MCF 10A (cell line): ENCODE measurements at regions of chr18 and their contacts with region 1.

Region 1: DNA sequence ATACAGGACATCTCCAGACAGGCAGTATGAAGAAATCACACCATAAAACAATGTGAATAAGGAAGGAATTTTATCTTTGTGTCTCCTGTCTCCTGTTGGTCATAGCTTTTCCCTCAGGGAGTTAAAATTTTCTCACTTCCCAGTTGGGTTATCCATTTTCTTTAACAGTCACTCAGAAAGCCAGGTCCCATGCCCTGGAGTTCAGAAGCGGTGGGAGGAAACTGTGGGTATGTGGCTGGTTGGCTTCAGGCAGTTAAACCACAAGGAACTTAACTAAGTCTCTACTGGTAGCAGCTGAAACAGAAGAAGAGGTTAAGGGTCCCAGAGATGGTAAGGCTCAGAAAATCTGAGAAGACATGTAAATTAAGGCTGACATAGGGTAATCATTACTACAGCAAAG is 6.5 kb upstream of the SMAD2 start:
- DNase-seq: no peak
- H3K4me3 Mint-ChIP-seq: no peak overlapping the region
- H3K27ac Mint-ChIP-seq: no peak overlapping the region
- H3K4me1 Mint-ChIP-seq: peaks cover 3% of the 10 kb centered on the region
- H3K27me3 Mint-ChIP-seq: no peaks in the 10 kb centered on the region
- CTCF ChIP-seq: no peak

Region 2: DNA sequence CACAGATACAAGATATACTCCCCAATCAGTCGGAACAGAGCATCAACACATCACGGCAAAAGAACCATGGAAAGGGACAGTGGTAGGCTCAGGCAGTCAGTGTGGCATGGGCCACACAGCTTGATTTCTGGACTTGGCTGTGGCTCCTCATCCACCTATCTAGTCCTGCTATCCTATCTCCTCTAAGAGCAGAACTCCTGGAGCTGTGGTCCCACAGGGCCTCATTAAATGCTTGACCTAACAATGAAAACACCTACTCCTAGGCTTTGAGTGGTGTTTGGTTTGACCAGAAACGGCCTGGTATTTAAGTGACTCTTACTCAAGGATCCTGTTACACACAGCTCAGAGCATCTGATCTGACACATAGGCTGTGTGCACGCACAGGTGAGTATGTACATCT is 27.1 kb after region 1 on chr18:
- CTCF ChIA-PET with region 1: no interaction called
- POLR2A ChIA-PET with region 1: no interaction called
- intact Hi-C with region 1: loop called (anchors 1 kb)
- DNase-seq: no peak
- H3K4me3 Mint-ChIP-seq: no peak overlapping the region
- H3K27ac Mint-ChIP-seq: no peak overlapping the region
- H3K4me1 Mint-ChIP-seq: no peaks in the 10 kb centered on the region
- H3K27me3 Mint-ChIP-seq: peaks cover 13% of the 10 kb centered on the region
- CTCF ChIP-seq: no peak